Activated CD4-positive, alpha-beta T cell treated with anti-CD3 and anti-CD28 coated beads for 36 hours (primary cell): ENCODE measurements at regions of chr2 and their contacts with region 1.

Region 1: DNA sequence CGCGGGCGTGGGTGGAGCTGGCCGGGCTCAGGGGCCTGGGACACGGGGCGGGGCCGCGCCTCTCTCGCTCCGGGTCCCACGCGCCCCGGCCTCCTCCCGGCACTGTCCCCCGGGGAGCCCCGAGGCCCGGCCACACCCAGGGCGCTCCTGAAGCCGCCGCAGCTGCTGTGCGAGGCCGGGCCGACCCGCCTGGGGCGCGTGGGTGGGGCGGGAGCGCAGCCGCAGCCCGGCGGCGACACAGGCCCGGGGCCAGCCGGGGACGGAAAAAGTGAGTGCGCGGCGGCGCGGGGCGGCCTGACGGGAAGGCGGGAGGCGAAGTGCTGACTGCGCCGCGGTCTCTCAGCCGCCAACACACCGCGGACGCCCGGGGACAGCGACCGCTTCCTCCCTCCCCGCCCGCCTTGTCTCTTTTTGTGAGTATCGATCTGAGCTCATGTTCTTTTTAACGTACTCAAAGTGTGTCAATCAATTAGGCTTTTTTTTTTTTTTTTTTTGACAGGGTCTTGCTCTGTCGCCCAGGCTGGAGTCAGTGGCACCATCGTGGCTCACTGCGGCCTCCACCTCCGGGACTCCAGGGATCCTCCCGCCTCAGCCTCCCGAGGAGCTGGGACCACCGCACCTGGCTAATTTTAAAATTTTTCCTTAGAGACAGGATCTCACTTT is 14.5 kb downstream of the PDCD1 start:
- DNase-seq: peak; percentile 95
- ATAC-seq: peak; percentile 82
- H3K4me3 Mint-ChIP-seq: peak overlapping the region; percentile 67
- H3K27ac Mint-ChIP-seq: peak overlapping the region; percentile 85
- H3K4me1 Mint-ChIP-seq: peaks cover 36% of the 10 kb centered on the region
- H3K27me3 Mint-ChIP-seq: no peaks in the 10 kb centered on the region

Region 2: GRCh38 chr2:241443486-241444223 is 400.5 kb before region 1 on chr2:
- CTCF ChIA-PET with region 1: no interaction called
- POLR2A ChIA-PET with region 1: no interaction called
- intact Hi-C with region 1: loop called in 1 of 2 experiments (anchors 5 kb)
- DNase-seq: peak; percentile 95
- ATAC-seq: peak; percentile 86
- H3K4me3 Mint-ChIP-seq: peak overlapping the region; percentile 48
- H3K27ac Mint-ChIP-seq: peak overlapping the region; percentile 45
- H3K4me1 Mint-ChIP-seq: peaks cover 27% of the 10 kb centered on the region
- H3K27me3 Mint-ChIP-seq: peaks cover 37% of the 10 kb centered on the region

Region 3: DNA sequence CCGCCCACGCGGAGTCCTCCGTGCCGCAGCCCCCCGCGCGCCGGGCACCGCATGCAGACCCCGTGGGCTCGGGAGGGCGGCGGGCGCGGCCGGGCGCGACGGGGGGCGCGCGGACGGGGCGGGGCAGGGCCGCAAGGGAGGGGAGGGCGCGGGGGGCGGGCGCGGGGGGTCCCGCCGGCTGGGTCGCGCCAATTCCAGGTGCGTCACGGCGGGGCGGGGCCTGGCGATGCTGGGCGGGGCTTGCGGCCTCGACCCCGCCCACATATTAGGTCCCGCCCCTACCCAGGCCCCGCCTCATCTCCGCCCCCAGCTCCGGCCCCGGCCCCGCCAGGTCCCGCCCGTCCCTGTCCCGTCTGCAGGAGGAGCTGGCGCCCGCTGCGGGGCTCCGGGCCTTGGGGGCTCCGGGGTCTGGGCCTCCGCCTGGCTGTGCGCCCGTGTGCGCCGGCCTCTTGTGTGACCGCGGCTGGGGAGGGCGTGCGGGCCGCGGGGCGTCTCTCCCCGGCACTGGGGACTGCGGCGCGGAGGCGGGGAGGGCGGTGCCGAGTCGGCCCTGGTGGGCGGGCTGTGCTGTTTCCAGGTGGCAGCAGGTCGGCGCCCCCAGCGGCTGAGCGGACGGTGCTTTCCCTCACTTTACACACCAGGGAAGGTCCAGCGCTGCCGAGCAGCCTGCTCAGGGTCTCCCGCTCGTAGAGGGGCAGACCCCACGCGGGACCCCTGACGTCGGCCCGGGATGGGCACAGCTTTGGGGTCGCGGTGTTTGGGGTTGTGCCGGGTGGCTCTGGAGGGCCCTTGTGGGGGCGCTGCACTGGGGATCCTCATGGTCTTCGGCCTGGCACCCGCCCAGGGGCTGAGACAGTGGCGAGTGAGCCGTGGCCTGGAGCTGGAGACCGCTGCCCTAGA is 141.8 kb before region 1 on chr2:
- CTCF ChIA-PET with region 1: interaction called, 3 read pairs
- POLR2A ChIA-PET with region 1: interaction called, 3 read pairs
- intact Hi-C with region 1: loop called in 1 of 2 experiments (anchors 1 kb)
- DNase-seq: peak; percentile 94
- ATAC-seq: peak; percentile 70
- H3K4me3 Mint-ChIP-seq: peak overlapping the region; percentile 86
- H3K27ac Mint-ChIP-seq: peak overlapping the region; percentile 75
- H3K4me1 Mint-ChIP-seq: peaks cover 29% of the 10 kb centered on the region
- H3K27me3 Mint-ChIP-seq: no peaks in the 10 kb centered on the region

Region 4: GRCh38 chr2:241788572-241788971 is 55.6 kb before region 1 on chr2:
- CTCF ChIA-PET with region 1: no interaction called
- POLR2A ChIA-PET with region 1: interaction called, 3 read pairs
- intact Hi-C with region 1: loop called in 1 of 2 experiments (anchors 1 kb)
- DNase-seq: peak; percentile 75
- ATAC-seq: peak; percentile 93
- H3K4me3 Mint-ChIP-seq: no peak overlapping the region
- H3K27ac Mint-ChIP-seq: peak overlapping the region; percentile 79
- H3K4me1 Mint-ChIP-seq: peaks cover 24% of the 10 kb centered on the region
- H3K27me3 Mint-ChIP-seq: peaks cover 3% of the 10 kb centered on the region

Region 5: DNA sequence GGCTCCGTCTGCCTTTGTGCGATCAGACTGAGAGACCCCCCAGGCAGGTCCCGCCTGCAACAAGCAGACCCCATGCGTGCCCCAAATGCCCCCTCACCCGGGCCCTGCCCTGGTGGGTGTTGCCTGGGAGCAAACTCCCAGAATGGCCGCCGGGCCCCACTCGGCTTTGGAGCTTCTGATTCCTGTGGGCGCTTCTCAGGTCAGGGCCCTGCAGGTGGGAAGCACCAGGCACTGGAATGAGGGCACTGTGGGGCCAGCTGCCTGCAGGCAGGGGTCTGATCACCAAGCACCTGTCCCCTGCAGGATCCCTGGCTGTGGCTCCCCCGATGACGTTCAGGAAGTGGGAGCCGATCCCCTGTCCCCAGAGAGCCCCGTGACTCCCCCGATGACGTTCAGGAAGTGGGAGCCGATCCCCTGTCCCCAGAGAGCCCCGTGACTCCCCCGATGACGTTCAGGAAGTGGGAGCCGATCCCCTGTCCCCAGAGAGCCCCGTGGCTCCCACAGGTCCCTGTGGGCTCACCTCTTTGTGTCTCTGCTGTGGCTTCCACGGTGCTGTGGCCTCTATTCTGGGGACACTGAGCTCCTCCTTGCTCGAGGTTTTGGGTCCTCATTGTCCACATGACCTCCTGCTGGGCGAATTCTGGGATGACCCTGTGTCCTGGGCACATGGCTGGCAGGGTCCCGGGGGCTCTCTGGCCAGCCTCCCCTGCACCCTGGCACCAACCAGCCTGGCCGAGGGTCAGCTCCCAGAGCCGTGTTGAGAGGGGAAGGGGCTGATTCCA is 30.5 kb before region 1 on chr2:
- CTCF ChIA-PET with region 1: no interaction called
- POLR2A ChIA-PET with region 1: no interaction called
- intact Hi-C with region 1: no loop called
- DNase-seq: no peak
- ATAC-seq: peak; percentile 66
- H3K4me3 Mint-ChIP-seq: no peak overlapping the region
- H3K27ac Mint-ChIP-seq: no peak overlapping the region
- H3K4me1 Mint-ChIP-seq: peaks cover 5% of the 10 kb centered on the region
- H3K27me3 Mint-ChIP-seq: no peaks in the 10 kb centered on the region

Region 6: DNA sequence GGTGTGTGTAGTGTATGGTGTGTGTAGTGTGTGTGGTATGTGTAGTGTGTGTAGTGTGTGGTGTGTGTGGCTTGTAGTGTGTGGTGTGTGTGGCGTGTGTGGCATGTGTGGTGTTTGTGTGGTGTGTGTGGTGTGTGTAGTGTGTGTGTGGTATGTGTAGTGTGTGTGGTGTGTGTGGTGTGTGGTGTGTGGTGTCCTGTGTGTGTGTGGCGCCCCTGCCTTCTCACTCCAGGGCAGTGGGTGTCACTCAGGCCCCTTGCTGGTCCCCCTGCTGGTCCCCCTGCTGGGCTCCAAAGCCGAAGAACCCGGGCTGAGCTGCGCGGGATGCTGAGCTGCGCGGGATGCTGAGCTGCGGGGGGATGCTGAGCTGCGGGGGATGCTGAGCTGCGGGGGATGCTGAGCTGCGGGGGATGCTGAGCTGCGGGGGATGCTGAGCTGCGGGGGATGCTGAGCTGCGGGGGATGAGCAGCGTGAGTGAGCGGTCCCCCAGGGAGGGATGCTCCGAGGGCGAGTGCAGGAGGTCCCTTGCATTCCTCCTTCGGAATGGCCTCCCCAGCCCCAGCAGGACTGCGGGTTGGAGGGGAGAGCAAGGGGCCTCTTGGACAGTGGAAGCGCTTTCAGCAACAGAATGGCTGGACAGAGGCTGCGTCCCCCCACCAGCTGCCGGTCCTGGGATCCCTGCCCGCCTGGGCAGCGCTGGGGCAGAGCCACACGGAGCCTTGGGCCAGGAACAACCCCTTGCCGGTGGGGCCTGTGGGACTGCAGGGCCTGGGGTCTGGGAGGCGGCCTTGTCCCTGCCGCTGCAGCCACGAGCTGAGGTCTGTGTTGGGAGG is 22.0 kb after region 1 on chr2:
- CTCF ChIA-PET with region 1: interaction called, 4 read pairs
- POLR2A ChIA-PET with region 1: interaction called, 13 read pairs
- intact Hi-C with region 1: loop called in 1 of 2 experiments (anchors 1 kb)
- DNase-seq: peak; percentile 70
- ATAC-seq: no peak
- H3K4me3 Mint-ChIP-seq: no peak overlapping the region
- H3K27ac Mint-ChIP-seq: no peak overlapping the region
- H3K4me1 Mint-ChIP-seq: peaks cover 80% of the 10 kb centered on the region
- H3K27me3 Mint-ChIP-seq: peaks cover 24% of the 10 kb centered on the region

Region 7: GRCh38 chr2:242002944-242003343 is 158.7 kb after region 1 on chr2:
- CTCF ChIA-PET with region 1: no interaction called
- POLR2A ChIA-PET with region 1: no interaction called
- intact Hi-C with region 1: no loop called
- DNase-seq: no peak
- ATAC-seq: peak; percentile 23
- H3K4me3 Mint-ChIP-seq: no peak overlapping the region
- H3K27ac Mint-ChIP-seq: peak overlapping the region; percentile 53
- H3K4me1 Mint-ChIP-seq: peaks cover 18% of the 10 kb centered on the region
- H3K27me3 Mint-ChIP-seq: no peaks in the 10 kb centered on the region